Panc1 (cell line): ENCODE measurements at regions of chr2 and their contacts with region 1.

Region 1: DNA sequence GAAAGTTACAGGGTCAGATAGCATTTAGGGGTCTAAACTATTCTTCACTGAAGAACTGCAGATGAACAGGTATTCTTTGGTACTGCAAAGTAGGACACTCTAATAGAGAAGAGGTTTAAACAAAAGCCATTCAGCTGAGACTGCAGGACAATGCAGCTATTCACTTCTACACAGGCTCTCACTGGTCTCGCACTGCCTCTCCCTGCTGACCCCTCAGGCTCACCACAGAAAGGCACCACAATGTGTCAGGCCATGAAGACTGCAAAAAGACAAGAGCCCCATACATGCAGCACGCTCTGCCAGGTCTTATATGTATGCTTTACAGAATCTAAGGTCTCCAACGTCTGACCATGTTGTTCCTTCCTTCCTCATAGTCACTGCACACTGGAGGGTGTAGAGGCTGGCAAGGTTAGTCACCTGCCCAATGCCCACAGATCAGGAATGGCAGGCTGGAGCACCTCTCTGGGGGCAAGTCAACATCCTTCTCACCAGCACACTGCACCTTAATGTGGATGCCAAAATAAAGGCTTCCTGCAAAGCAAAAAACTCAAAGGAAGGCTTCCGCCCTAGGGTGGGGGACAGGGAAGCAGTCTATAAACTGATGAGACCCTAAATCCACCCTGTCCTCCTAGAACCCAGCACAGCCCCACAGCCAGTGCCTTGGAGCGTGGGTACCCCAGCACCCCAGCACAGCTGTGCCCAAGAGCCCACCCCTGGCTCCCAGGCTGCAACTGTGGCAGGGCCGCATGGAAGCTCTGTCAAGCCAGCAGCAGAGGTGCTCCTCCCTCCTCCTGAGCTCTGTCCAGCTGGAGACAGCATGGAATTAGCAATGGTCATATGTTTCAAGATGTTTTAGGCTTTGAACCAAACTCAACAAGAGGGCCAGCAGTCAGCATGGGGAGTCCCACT is 10.7 kb upstream of the RNU4ATAC start:
- DNase-seq: no peak
- ATAC-seq: no peak
- H3K4me3 ChIP-seq: no peak overlapping the region
- H3K27ac ChIP-seq: no peak overlapping the region
- H3K4me1 ChIP-seq: no peaks in the 10 kb centered on the region
- H3K27me3 ChIP-seq: no peaks in the 10 kb centered on the region
- CTCF ChIP-seq: no peak

Region 2: DNA sequence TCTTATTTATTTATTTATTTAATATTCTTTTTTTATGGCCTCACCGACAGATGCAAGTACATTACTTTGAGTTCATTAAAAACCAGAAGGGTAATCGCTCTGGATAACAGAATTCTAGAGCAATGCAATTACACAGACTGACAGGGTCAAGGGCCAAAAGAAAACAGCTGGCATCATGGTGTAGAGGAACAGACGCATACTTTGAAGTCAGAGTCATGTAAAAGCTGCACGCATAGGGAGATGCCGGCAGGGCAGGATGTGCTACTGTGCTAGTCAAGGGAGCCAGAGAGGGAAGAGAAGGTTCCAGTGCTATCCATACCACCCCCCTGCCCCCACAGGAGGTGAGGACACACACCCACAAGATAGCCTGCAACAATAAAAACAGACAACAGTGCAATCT is 119.8 kb before region 1 on chr2:
- CTCF ChIA-PET with region 1: no interaction called
- POLR2A ChIA-PET with region 1: no interaction called
- in situ Hi-C with region 1: no loop called
- intact Hi-C with region 1: loop called (anchors 10 kb)
- DNase-seq: no peak
- ATAC-seq: no peak
- H3K4me3 ChIP-seq: no peak overlapping the region
- H3K27ac ChIP-seq: no peak overlapping the region
- H3K4me1 ChIP-seq: no peaks in the 10 kb centered on the region
- H3K27me3 ChIP-seq: no peaks in the 10 kb centered on the region
- CTCF ChIP-seq: no peak

Region 3: GRCh38 chr2:121418494-121419058 is 101.4 kb before region 1 on chr2:
- CTCF ChIA-PET with region 1: no interaction called
- POLR2A ChIA-PET with region 1: no interaction called
- in situ Hi-C with region 1: no loop called
- intact Hi-C with region 1: no loop called
- DNase-seq: no peak
- ATAC-seq: no peak
- H3K4me3 ChIP-seq: no peak overlapping the region
- H3K27ac ChIP-seq: no peak overlapping the region
- H3K4me1 ChIP-seq: no peaks in the 10 kb centered on the region
- H3K27me3 ChIP-seq: no peaks in the 10 kb centered on the region
- CTCF ChIP-seq: no peak

Region 4: GRCh38 chr2:121505005-121505404 is 15.0 kb before region 1 on chr2:
- CTCF ChIA-PET with region 1: no interaction called
- POLR2A ChIA-PET with region 1: interaction called, 14 read pairs
- in situ Hi-C with region 1: no loop called
- intact Hi-C with region 1: no loop called
- DNase-seq: no peak
- ATAC-seq: no peak; the same call in 1 of the 2 replicates
- H3K4me3 ChIP-seq: no peak overlapping the region
- H3K27ac ChIP-seq: no peak overlapping the region
- H3K4me1 ChIP-seq: no peaks in the 10 kb centered on the region
- H3K27me3 ChIP-seq: no peaks in the 10 kb centered on the region
- CTCF ChIP-seq: no peak